ENCODE measurements at regions of chr3 and their contacts with region 1.

Region 1: GRCh38 chr3:9769426-9770275 is at the start of gene CAMK1:
- DNase-seq: peak in 1 of 2 experiments; percentile 59
- H3K4me3 ChIP-seq: peak within 1 kb of the TSS; percentile 49; the same call in 1 of the 2 replicates
- H3K27ac ChIP-seq: no peak within 1 kb of the TSS
- H3K4me1 ChIP-seq: no peaks in the 10 kb centered on the region
- H3K27me3 ChIP-seq: peaks cover 7% of the 10 kb centered on the region; the same call in 1 of the 2 replicates
- CTCF ChIP-seq: no peak
- total RNA-seq, gene CAMK1: 2.0 and 3.1 TPM in 2 replicates

Region 2: DNA sequence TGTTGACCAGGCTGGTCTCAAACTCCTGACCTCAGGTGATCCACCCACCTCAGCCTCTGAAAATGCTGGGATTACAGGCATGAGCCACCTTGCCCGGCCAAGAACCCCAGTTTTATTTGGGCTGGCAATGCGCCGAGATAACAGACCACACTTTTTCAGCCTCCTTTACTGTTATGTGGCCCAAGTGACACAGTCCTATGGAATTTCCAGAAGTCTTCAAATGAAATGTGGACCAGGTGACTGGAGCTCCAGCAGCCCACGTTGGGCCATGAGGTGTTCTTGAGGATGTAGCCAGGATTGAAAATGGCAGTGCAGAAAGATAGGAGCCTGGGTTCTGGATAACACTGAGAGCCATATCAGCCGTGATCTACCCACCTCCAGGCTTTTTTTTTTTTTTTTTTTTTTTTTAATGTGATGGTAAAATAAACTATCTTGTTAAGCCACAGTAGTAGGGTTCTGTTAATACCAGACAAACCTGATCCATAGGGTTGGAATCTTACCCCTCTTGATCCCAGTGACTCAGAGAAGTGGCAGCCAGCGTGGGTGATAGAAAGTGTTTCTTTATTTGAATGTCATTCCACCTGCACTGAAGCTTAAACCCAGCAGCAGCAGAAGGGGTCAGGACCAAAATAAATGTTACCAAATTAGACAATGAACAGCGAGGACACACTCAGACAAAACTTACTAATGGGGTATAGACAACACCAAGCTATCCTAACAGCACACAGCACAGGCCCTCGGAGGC is 271.7 kb before region 1 on chr3:
- CTCF ChIA-PET with region 1: interaction called, 27 read pairs
- POLR2A ChIA-PET with region 1: no interaction called
- intact Hi-C with region 1: no loop called
- DNase-seq: peak; percentile 49 to 70
- H3K4me3 ChIP-seq: no peak overlapping the region
- H3K27ac ChIP-seq: no peak overlapping the region
- H3K4me1 ChIP-seq: peaks cover 21% of the 10 kb centered on the region
- H3K27me3 ChIP-seq: no peaks in the 10 kb centered on the region
- CTCF ChIP-seq: no peak

Region 3: DNA sequence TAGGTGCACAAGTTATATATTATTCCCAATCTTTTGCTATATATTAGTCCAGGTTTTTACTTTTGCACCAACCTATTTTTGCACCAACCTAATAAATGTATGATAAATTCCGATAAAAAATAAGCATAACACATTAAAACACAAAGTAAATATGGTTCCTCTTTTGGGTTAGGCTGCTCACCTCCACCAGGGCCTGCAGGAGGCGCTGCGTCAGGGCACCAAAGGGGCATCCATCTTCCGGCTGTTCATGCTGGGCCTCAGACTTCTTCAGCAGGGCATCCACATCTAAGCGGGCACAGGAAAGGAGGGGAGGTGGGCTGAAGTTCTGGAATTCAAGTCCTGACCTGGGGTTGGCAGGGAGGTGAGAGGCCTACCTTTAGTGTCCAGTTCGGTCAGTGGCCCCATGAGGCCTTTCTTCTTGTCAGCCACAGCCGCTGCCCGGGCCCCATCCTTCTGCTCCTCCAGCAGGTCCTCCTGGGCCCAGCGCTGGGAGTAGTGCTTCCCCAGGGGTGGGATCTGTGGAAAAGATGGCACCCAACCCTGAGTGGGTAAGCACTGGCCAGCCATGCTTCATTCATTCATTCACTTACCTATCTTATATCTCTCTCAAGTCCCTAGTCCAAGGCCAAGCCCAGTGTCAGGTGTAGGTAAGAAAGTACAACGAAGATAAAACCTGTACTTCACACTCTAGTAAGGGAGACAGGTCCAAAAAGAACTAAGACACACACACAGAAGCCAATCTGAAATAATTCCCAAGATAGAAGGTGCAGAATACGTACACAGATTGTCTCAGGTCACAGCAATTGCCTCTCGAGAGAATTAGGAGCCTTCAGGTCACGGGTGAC is 17.4 kb after region 1 on chr3:
- CTCF ChIA-PET with region 1: no interaction called
- POLR2A ChIA-PET with region 1: no interaction called
- intact Hi-C with region 1: no loop called
- DNase-seq: no peak
- H3K4me3 ChIP-seq: no peak overlapping the region
- H3K27ac ChIP-seq: no peak overlapping the region
- H3K4me1 ChIP-seq: peaks cover 8% of the 10 kb centered on the region
- H3K27me3 ChIP-seq: no peaks in the 10 kb centered on the region
- CTCF ChIP-seq: peak; percentile 68

Region 4: GRCh38 chr3:10085736-10086135 is 316.1 kb after region 1 on chr3:
- CTCF ChIA-PET with region 1: no interaction called
- POLR2A ChIA-PET with region 1: no interaction called
- intact Hi-C with region 1: no loop called
- DNase-seq: peak; percentile 14 to 81
- H3K4me3 ChIP-seq: no peak overlapping the region
- H3K27ac ChIP-seq: peak overlapping the region; percentile 55
- H3K4me1 ChIP-seq: peaks cover 26% of the 10 kb centered on the region
- H3K27me3 ChIP-seq: no peaks in the 10 kb centered on the region
- CTCF ChIP-seq: no peak

Measured in PC-9 (cell line).